Mammary epithelial cell (primary cell): ENCODE measurements at regions of chr1 and their contacts with region 1.

Region 1: GRCh38 chr1:33007190-33008050 is 29.3 kb downstream of the AK2 start:
- DNase-seq: peak; percentile 93
- H3K4me3 ChIP-seq: no peak overlapping the region
- H3K27ac ChIP-seq: peak overlapping the region; percentile 51
- H3K4me1 ChIP-seq: peaks cover 55% of the 10 kb centered on the region
- H3K27me3 ChIP-seq: no peaks in the 10 kb centered on the region
- CTCF ChIP-seq: peak; percentile 74 to 76

Region 2: DNA sequence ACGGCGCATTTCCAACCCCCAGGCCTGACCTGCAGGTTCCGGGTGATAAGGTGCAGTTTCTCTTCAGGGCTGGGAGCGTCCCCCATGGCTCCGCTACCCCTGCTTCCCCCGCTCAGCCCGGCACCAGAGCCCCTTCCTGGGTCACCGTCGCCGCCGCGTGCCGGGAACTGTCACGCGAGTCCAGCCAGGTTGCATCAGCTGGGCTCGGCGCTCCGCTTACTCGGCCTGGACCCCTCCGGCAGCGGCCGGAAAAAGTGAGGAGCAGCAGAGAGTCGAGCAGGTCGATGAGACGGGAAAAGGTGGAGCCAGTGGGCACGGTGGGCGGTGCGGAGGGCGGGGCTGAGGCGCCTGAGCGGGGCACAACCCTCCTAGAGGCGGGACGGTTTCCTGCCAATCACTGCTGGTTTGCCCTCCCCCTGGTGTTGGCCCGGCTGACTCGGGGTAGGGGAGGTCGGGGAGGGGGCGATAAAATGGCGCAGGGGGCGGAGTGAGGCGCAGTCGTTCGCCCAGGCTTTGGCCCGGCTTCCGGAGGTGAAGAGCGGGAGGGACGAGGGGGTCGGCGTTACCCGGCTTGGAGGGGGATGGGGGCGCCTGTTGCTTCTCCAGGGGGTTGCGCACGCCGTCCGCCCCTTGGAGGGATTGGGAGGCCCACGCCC is 190.1 kb before region 1 on chr1 and contains the starts of genes S100PBP and YARS1:
- CTCF ChIA-PET with region 1: no interaction called
- dilution Hi-C with region 1: no loop called
- in situ Hi-C with region 1: no loop called
- intact Hi-C with region 1: no loop called
- DNase-seq: peak; percentile 98
- H3K4me3 ChIP-seq: peak within 1 kb of the TSS; percentile 91 to 96 (median 91)
- H3K27ac ChIP-seq: peak within 1 kb of the TSS; percentile 98
- H3K4me1 ChIP-seq: peaks cover 23% of the 10 kb centered on the region
- H3K27me3 ChIP-seq: no peaks in the 10 kb centered on the region
- CTCF ChIP-seq: no peak
- total RNA-seq, gene S100PBP: 31.2 to 41.7 TPM
- total RNA-seq, gene YARS1: 165 to 219 TPM

Region 3: GRCh38 chr1:32933742-32934322 is 73.6 kb before region 1 on chr1:
- CTCF ChIA-PET with region 1: interaction called, 19 read pairs
- dilution Hi-C with region 1: no loop called
- in situ Hi-C with region 1: loop called (anchors 5 kb)
- intact Hi-C with region 1: loop called (anchors 1 kb)
- DNase-seq: peak; percentile 80
- H3K4me3 ChIP-seq: no peak overlapping the region
- H3K27ac ChIP-seq: peak overlapping the region; percentile 41
- H3K4me1 ChIP-seq: peaks cover 20% of the 10 kb centered on the region
- H3K27me3 ChIP-seq: no peaks in the 10 kb centered on the region
- CTCF ChIP-seq: no peak

Region 4: DNA sequence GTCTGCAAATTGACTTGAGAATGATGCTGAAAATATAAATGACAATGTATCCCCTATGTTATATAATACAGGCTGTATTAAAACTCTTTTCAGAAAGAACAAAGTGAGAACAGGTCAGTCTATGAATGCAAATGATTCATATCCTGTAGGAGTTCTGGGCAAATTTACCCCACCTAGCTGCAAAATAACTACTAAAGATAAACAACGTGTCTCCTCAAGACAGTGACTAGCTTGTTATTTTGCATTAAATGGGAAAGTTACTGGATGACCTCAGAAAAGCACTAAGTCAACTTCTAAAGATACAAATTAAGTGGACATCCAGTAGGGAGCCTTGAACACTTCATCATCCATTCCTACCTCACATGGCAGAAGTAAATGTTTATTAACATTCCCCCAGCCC is 53.9 kb before region 1 on chr1:
- CTCF ChIA-PET with region 1: no interaction called
- dilution Hi-C with region 1: no loop called
- in situ Hi-C with region 1: no loop called
- intact Hi-C with region 1: loop called (anchors 2 kb)
- DNase-seq: peak; percentile 91
- H3K4me3 ChIP-seq: no peak overlapping the region
- H3K27ac ChIP-seq: peak overlapping the region; percentile 89
- H3K4me1 ChIP-seq: peaks cover 40% of the 10 kb centered on the region
- H3K27me3 ChIP-seq: no peaks in the 10 kb centered on the region
- CTCF ChIP-seq: no peak

Region 5: DNA sequence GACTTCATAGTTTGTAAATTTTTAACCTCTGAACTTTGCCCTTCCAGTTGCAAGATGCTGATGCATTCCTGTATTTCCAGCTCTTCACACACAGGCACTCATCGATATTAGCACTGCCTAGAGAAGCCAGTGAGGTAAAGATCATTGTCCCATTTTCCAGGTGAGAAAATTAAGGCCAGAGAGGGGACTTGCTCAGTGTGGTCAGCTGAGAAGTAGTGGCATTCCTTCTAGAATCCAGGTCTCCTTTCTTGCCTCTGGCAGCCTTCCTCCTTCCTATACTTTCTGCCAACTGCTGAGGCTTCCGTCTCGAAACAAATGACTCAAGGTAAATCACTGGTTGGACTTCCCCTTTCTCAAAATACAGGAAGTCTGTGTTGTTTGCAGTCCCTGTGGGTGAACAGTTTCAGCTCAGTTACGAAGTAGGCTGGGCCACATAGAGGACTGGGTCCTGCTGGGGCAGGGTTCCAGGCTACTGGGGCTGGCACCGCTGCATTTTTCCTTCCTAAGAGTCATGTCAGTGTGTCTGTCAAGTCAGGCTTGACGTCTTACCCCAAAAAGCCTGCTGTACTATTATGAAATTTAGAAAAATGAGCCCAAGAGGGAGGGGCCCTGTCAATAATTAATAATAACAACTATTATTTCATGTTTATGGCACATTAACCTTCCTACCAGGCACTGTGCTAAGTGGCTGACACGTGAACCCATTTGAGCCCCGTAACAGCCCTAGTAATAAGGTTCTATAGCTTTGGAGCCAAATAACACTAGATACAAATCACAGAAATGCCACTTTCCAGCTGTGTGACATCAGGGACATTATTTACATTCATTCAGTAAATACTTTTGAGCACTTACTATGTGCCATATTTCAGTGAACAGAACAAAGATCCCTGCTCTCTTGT is 26.2 kb before region 1 on chr1:
- CTCF ChIA-PET with region 1: no interaction called
- dilution Hi-C with region 1: no loop called
- in situ Hi-C with region 1: no loop called
- intact Hi-C with region 1: loop called (anchors 1 kb)
- DNase-seq: peak; percentile 99
- H3K4me3 ChIP-seq: no peak overlapping the region
- H3K27ac ChIP-seq: peak overlapping the region; percentile 97
- H3K4me1 ChIP-seq: peaks cover 15% of the 10 kb centered on the region
- H3K27me3 ChIP-seq: no peaks in the 10 kb centered on the region
- CTCF ChIP-seq: no peak

Region 6: GRCh38 chr1:33055210-33056008 is 48.0 kb after region 1 on chr1:
- CTCF ChIA-PET with region 1: interaction called, 4 read pairs
- dilution Hi-C with region 1: no loop called
- in situ Hi-C with region 1: no loop called
- intact Hi-C with region 1: loop called (anchors 2 kb)
- DNase-seq: peak; percentile 64
- H3K4me3 ChIP-seq: no peak overlapping the region
- H3K27ac ChIP-seq: no peak overlapping the region
- H3K4me1 ChIP-seq: peaks cover 13% of the 10 kb centered on the region
- H3K27me3 ChIP-seq: no peaks in the 10 kb centered on the region
- CTCF ChIP-seq: peak; percentile 50 to 66